Astrocyte of the cerebellum (primary cell): ENCODE measurements at regions of chr16 and their contacts with region 1.

Region 1: DNA sequence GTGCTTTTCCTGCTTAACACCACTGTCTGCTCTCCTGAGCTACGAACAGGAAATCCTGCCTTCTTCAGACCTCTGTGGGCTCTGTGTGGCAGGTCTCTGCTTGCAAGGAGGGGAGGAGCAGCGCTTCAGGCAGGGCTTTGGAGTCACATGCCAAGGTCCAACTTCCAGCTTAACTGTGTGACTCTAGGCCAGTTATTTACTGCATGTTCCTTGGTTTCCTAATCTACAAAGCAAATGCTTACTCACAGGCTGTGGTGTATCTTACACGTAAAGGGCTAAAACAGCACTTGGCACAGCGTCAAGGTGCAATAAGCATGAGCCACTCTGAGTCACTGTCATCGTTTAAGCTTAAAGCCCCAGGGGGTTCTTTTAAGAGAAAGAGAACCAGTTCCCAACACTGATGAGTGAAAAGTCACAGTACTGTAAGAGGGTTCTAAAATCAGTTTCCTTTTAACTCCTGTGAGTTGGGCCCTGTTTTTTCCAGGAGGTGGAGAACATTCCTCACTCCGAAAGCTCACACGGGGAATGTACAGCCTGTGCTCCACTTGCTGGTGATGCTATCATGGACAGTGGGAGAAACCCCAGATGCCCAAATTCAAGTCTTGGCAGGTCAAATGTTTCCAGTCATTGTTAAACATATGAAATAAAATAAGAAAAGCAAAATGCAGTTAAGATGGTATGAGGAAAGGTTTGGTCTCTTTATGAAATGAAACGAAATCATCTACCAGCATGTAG is 54.1 kb upstream of the BCAR1 start:
- DNase-seq: peak; percentile 100
- H3K4me3 ChIP-seq: no peak overlapping the region
- CTCF ChIP-seq: peak; percentile 23

Region 2: DNA sequence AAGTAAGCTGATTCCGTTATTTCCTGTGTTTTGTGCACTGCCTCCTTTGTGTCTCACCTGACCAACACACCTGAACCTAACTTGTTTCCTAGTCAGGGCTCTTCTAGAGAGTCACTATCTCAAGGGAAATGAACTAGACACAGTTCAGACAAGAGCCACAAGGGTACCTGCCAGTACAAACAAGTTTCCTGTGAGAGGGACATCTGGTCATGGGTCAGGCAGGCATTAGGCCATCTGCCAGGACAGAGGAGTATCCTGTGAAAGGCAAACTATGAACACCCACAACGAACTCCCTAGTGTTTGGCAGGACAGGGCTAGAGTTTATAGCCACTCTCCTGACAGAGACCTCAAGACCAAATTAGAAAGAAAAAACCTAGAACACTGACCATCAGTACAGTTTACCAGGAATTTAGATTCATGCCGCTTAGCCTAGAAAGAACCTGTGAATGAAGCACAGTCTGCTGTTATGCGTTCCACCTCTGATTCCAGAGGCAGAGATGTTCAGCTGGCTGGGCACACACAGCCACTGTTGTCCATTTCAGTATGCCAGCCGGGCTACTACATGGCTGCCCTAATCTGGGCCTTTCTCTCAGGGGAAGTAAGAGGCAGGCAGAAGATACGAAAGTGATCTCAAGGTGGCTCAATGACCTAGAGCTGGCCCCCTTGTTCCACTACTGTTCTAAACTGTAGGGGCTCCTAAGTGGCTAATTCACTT is 677.9 kb before region 1 on chr16:
- in situ Hi-C with region 1: no loop called
- DNase-seq: no peak
- H3K4me3 ChIP-seq: no peak overlapping the region
- CTCF ChIP-seq: no peak

Region 3: GRCh38 chr16:75351183-75351582 is 45.7 kb after region 1 on chr16:
- in situ Hi-C with region 1: loop called (anchors 5 kb)
- DNase-seq: peak; percentile 60
- H3K4me3 ChIP-seq: no peak overlapping the region
- CTCF ChIP-seq: no peak